Gastrocnemius medialis (tissue), 4 donors: ENCODE measurements at regions of chr1 and their contacts with region 1.

Region 1: GRCh38 chr1:82048596-82048995 is 247.9 kb downstream of the ADGRL2 start:
- DNase-seq: no peak
- ATAC-seq: no peak
- H3K4me3 ChIP-seq: no peak overlapping the region
- H3K27ac ChIP-seq: no peak overlapping the region
- H3K4me1 ChIP-seq: peaks cover 3 to 7% of the 10 kb centered on the region in 2 donors
- H3K27me3 ChIP-seq: no peaks in the 10 kb centered on the region
- CTCF ChIP-seq: no peak
- POLR2A ChIP-seq: no peak

Region 2: DNA sequence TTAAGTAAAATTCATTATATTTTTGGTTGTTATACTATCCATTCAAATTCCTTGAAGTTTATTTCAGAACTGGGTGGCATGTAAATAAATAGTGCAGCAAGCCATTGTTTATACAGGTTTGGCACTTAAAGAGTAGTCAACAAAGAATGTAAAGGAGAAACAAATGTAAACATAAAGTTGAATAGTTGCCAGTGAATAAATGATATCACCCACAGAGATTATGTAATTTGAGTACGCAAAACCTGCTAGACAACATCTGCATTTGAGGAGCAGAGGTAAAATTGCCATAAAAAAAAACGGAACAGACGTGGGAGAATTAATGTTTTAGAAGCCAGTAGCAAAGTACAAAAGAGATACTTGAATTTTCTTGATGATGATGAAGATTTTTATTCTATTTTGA is 136.2 kb before region 1 on chr1:
- in situ Hi-C with region 1: no loop called
- intact Hi-C with region 1: no loop called
- DNase-seq: no peak
- ATAC-seq: no peak
- H3K4me3 ChIP-seq: no peak overlapping the region
- H3K27ac ChIP-seq: no peak overlapping the region
- H3K4me1 ChIP-seq: no peaks in the 10 kb centered on the region
- H3K27me3 ChIP-seq: no peaks in the 10 kb centered on the region
- CTCF ChIP-seq: no peak
- POLR2A ChIP-seq: no peak

Region 3: GRCh38 chr1:82030830-82031229 is 17.8 kb before region 1 on chr1:
- in situ Hi-C with region 1: no loop called
- intact Hi-C with region 1: loop called (anchors 1 kb)
- DNase-seq: no peak
- ATAC-seq: no peak
- H3K4me3 ChIP-seq: no peak overlapping the region
- H3K27ac ChIP-seq: no peak overlapping the region
- H3K4me1 ChIP-seq: no peaks in the 10 kb centered on the region
- H3K27me3 ChIP-seq: no peaks in the 10 kb centered on the region
- CTCF ChIP-seq: no peak
- POLR2A ChIP-seq: no peak